Heart right ventricle (tissue), 16 donors: ENCODE measurements at regions of chr3 and their contacts with region 1.

Region 1: DNA sequence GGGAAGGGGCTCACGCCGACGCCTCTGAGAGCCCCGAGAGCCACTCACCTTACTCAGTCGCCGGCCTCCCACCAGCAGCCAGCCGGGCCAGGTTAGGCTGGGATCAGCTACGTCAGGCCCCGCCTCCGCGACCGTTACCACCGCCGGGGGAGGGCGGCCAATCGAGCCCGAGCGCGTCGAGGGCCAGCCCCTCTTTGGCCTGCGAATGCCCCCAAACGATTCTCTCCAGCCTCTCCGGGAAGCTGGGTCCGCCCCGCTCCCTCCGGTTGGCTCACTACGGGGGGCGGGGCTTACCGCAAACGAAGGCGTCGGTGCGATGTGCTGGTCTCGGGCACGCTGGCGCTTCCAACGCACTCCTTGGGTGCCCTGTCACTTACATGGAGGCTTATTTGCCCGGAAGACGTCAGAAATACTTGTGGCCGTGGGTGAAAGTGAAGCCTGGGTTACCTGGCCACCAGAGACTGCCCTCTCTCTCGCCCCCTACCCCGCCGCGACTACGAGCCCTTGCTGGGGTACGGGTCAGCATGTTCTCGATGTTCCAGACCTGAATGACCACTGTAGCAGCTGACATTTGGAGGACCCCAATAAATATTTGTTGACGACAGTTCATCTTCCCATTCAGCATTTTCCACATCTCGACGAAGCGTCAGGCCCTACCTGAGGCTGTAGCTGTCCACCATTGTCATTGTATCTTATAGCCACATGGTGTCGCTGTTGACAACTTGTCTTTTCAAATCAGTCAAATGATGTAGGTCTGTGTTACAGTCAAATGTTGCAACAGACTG is at the start of gene CEP70:
- DNase-seq: peak; percentile 93 to 94
- ATAC-seq: peak; percentile 98 to 99 (median 99)
- H3K4me3 ChIP-seq: peak within 1 kb of the TSS; percentile 62 to 91 (median 74)
- H3K27ac ChIP-seq: peak within 1 kb of the TSS; percentile 45 to 91 (median 87)
- H3K4me1 ChIP-seq: peaks cover 0 to 25% (median 9%) of the 10 kb centered on the region in 9 donors
- H3K27me3 ChIP-seq: peaks cover 0 to 8% (median 0%) of the 10 kb centered on the region in 7 donors
- CTCF ChIP-seq: peak; percentile 77 to 93 (median 90)
- total RNA-seq, gene CEP70: 22.2 to 32.2 (median 24.8) TPM

Region 2: GRCh38 chr3:138332472-138333076 is 261.8 kb before region 1 on chr3:
- intact Hi-C with region 1: loop called in 1 of 10 experiments (anchors 10 kb)
- DNase-seq: no peak
- ATAC-seq: no peak
- H3K4me3 ChIP-seq: no peak overlapping the region
- H3K27ac ChIP-seq: no peak overlapping the region
- H3K4me1 ChIP-seq: peaks cover 0 to 25% (median 8%) of the 10 kb centered on the region in 9 donors
- H3K27me3 ChIP-seq: peaks cover 0 to 6% (median 0%) of the 10 kb centered on the region in 7 donors
- CTCF ChIP-seq: peak; percentile 46 to 76 (median 71)

Region 3: DNA sequence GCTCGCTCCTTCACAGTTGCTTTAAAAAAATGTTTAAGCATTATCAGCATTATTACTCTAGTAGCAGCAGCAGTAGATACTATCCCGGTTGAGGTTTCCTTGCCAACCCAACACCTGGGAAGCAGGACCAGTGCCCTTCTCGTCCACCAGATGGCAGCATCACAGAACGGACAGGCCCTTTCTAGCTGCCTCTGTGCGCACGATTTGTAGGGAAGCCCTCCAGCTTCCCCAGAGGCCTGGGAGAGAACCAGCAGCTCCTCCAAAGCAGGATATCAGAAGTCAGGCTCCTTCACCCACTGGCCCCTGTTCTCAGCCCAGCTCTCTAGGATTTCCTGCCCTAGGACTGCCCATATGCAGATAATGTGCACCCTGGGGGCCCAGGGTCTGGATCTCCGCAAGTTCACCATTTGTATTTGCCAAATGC is 176.8 kb before region 1 on chr3:
- intact Hi-C with region 1: loop called in 1 of 10 experiments (anchors 5 kb)
- DNase-seq: peak; percentile 69 to 83
- ATAC-seq: peak; percentile 80 to 91 (median 88)
- H3K4me3 ChIP-seq: no peak overlapping the region
- H3K27ac ChIP-seq: no peak overlapping the region
- H3K4me1 ChIP-seq: peaks cover 0 to 21% (median 6%) of the 10 kb centered on the region in 9 donors
- H3K27me3 ChIP-seq: no peaks in the 10 kb centered on the region
- CTCF ChIP-seq: peak; percentile 79 to 96 (median 92)

Region 4: GRCh38 chr3:138608322-138609135 is 14.2 kb after region 1 on chr3 and contains the start of gene FAIM:
- intact Hi-C with region 1: loop called in 1 of 10 experiments (anchors 2 kb)
- DNase-seq: peak; percentile 59 to 75
- ATAC-seq: peak; percentile 82 to 93 (median 86)
- H3K4me3 ChIP-seq: peak within 1 kb of the TSS; percentile 33 to 95 (median 78)
- H3K27ac ChIP-seq: peak within 1 kb of the TSS; percentile 86 to 99 (median 96)
- H3K4me1 ChIP-seq: peaks cover 3 to 15% (median 12%) of the 10 kb centered on the region in 9 donors
- H3K27me3 ChIP-seq: no peaks in the 10 kb centered on the region
- CTCF ChIP-seq: no peak
- total RNA-seq, gene FAIM: 1.5 to 3.6 (median 2.7) TPM

Region 5: DNA sequence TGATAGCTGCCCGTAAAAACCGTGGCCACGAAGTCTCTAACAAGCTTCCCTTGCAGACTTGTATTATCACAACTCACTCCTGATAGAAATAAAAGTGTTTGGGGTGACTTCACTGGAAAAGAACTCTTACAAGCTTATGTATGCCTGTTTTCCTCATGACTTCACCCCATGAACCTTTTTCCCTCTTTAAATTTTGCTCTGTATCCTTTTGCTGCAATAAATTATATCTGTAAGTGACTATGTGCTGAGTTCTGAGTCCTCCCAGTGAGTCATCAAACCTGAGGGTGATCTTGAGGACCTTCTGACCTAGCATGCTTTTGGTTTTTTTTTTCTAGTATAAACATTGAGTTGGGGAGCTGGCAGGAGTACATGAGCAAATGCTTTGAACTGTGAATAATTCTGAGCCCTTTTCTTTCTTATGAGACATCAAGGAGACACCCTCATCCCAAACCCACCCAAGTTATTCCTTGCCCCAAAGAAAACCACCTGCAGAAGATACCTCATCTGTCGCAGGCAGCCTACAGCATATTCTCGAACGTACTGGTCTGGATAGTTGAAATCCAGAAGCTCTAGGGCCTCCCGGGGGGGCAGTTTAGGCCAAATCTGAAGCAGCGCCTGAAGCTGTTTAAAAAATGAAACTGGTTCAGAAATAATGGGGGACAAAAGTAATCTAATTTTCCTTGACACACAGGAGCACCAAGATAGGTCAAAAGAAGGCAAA is 100.1 kb after region 1 on chr3:
- intact Hi-C with region 1: loop called in 1 of 10 experiments (anchors 10 kb)
- DNase-seq: no peak
- ATAC-seq: no peak
- H3K4me3 ChIP-seq: no peak overlapping the region
- H3K27ac ChIP-seq: no peak overlapping the region
- H3K4me1 ChIP-seq: peaks cover 0 to 4% (median 0%) of the 10 kb centered on the region in 9 donors
- H3K27me3 ChIP-seq: no peaks in the 10 kb centered on the region
- CTCF ChIP-seq: no peak

Region 6: DNA sequence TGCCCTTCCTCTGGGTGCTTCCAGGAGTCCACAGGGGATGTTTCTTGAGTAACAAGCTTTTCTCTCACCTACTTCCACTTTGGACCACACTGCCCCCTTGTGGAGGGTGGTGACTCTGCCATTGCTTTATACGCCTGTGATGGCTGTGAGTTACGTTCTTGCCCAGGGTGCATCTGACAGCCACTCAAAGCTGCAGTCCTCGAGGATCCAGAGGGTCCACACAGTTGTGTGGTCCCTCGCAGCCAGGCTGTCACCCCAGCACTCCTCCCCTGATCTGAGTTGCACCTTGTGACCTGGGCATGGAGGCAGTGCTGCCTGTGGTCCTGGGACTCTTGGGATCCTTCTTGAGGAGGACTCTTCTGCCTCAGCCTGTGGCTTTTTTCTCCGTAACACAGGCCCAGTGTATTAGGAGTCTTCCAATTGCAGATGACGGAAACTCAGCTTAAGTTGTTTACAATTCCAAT is 329.2 kb after region 1 on chr3:
- intact Hi-C with region 1: loop called in 6 of 10 experiments (anchors 2 to 5 kb)
- DNase-seq: peak; percentile 71 to 81
- ATAC-seq: peak; percentile 61 to 82 (median 78)
- H3K4me3 ChIP-seq: no peak overlapping the region
- H3K27ac ChIP-seq: no peak overlapping the region
- H3K4me1 ChIP-seq: peaks cover 0 to 6% (median 0%) of the 10 kb centered on the region in 9 donors
- H3K27me3 ChIP-seq: peaks cover 0 to 6% (median 0%) of the 10 kb centered on the region in 7 donors
- CTCF ChIP-seq: peak; percentile 82 to 95 (median 90)